PC-3 (cell line): ENCODE measurements at regions of chr3 and their contacts with region 1.

Region 1: GRCh38 chr3:48240711-48241491 is at the start of gene ZNF589:
- DNase-seq: peak; percentile 95
- ATAC-seq: peak; percentile 98
- H3K4me3 ChIP-seq: peak within 1 kb of the TSS; percentile 97
- H3K27ac ChIP-seq: peak within 1 kb of the TSS; percentile 45
- H3K4me1 ChIP-seq: peaks cover 8% of the 10 kb centered on the region; the same call in 1 of the 2 replicates
- H3K27me3 ChIP-seq: no peaks in the 10 kb centered on the region
- CTCF ChIP-seq: peak; percentile 47; the same call in 1 of the 2 replicates
- total RNA-seq, gene ZNF589: 9.4 and 10.2 TPM in 2 replicates

Region 2: GRCh38 chr3:48188266-48189201 is 52.4 kb before region 1 on chr3 and contains the start of gene CDC25A:
- CTCF ChIA-PET with region 1: no interaction called
- POLR2A ChIA-PET with region 1: no interaction called
- intact Hi-C with region 1: loop called (anchors 2 kb)
- DNase-seq: peak; percentile 99
- ATAC-seq: peak; percentile 93
- H3K4me3 ChIP-seq: peak within 1 kb of the TSS; percentile 74
- H3K27ac ChIP-seq: peak within 1 kb of the TSS; percentile 62
- H3K4me1 ChIP-seq: peaks cover 17% of the 10 kb centered on the region; the same call in 1 of the 2 replicates
- H3K27me3 ChIP-seq: no peaks in the 10 kb centered on the region
- CTCF ChIP-seq: no peak
- total RNA-seq, gene CDC25A: 42.4 and 43.0 TPM in 2 replicates

Region 3: DNA sequence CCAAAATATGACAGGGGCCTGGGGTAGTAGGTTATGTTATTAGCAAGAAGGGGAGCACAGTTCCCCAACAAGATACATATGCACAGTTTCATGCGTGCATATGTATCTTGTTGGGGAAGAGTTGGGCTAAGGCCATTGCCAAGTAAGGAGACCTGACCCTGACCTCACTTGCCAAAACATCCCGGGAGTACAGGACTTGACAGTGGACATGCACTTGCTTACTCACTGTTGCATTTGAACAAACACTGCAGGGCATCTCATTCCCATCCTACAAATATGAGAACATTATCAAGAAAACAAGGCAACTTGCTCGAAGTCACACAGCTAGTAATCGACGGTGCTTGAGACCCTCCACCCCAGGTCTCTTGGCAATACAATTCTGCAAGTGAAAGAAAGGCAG is 22.4 kb before region 1 on chr3:
- CTCF ChIA-PET with region 1: no interaction called
- POLR2A ChIA-PET with region 1: interaction called, 12 read pairs
- intact Hi-C with region 1: no loop called
- DNase-seq: no peak
- ATAC-seq: no peak
- H3K4me3 ChIP-seq: no peak overlapping the region
- H3K27ac ChIP-seq: no peak overlapping the region
- H3K4me1 ChIP-seq: peaks cover 10% of the 10 kb centered on the region
- H3K27me3 ChIP-seq: no peaks in the 10 kb centered on the region
- CTCF ChIP-seq: no peak

Region 4: DNA sequence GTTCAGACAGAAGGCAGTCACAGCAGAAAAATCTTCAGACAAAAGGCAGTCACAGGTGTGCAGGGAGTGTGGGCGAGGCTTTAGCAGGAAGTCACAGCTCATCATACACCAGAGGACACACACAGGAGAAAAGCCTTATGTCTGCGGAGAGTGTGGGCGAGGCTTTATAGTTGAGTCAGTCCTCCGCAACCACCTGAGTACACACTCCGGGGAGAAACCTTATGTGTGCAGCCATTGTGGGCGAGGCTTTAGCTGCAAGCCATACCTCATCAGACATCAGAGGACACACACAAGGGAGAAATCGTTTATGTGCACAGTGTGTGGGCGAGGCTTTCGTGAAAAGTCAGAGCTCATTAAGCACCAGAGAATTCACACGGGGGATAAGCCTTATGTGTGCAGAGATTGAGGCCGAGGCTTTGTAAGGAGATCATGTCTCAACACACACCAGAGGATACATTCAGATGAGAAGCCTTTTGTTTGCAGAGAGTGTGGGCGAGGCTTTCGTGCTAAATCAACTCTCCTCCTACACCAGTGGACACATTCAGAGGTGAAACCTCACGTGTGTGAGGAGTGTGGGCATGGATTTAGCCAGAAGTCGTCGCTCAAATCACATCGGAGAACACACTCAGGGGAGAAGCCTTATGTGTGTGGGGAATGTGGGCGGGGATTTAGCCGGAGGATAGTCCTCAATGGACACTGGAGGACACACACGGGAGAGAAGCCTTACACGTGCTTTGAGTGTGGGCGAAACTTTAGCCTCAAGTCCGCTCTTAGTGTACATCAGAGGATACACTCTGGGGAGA is 27.7 kb after region 1 on chr3:
- CTCF ChIA-PET with region 1: interaction called, 3 read pairs
- POLR2A ChIA-PET with region 1: interaction called, 6 read pairs
- intact Hi-C with region 1: loop called (anchors 2 kb)
- DNase-seq: peak; percentile 97
- ATAC-seq: peak; percentile 98
- H3K4me3 ChIP-seq: peak overlapping the region; percentile 47
- H3K27ac ChIP-seq: peak overlapping the region; percentile 93
- H3K4me1 ChIP-seq: peaks cover 28% of the 10 kb centered on the region
- H3K27me3 ChIP-seq: no peaks in the 10 kb centered on the region
- CTCF ChIP-seq: no peak